ENCODE measurements at regions of chr19 and their contacts with region 1.

Region 1: DNA sequence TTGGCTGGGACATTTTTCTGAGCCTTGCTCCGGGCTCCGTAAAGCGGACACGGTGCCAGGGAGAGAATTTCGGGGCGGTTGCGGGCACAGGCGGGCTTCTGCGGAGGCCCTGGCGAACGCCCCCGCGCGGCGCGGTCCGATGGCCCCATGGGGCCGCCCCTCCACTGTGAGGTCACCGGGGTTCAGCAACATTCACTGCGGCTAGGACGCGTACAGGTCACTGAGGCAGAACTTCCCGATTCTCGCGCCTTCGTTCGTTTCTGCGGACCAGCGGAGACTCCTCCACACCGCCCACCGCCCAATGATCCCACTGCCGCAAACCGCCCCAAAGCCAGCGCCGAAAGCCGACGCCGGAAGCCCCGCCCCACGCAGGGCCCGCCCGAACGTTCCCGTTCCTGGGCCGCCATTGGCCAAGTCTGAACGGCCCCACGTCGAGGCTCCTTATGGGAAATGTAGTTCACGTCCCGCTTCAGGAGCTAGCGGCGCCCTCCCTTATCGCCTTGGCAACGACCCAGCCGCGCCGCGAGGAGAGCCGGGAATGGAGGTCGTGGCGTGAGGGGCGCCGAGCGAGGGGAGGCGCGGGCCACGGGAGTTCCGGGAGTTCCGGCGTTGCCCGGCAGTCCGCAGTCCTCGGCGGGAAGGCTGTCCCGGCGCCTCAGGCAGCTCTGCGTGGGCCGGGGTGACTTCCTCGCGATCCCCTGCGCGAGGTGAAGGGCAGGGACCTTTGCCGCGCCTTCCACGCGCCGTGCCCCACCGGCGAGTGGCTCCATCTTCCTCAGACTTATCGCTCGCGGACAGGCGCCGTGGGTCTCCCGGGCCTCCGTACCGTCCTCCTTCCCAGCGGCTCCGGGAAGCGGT is at the start of gene ZNF584:
- DNase-seq: peak; percentile 92 to 98 (median 95)
- ATAC-seq: peak; percentile 94
- H3K4me3 ChIP-seq: peak within 1 kb of the TSS; percentile 87
- H3K27ac ChIP-seq: peak within 1 kb of the TSS; percentile 97
- H3K4me1 ChIP-seq: peaks cover 18 to 39% of the 10 kb centered on the region in 2 experiments
- H3K27me3 ChIP-seq: no peaks in the 10 kb centered on the region
- CTCF ChIP-seq: peak in 1 of 3 experiments; percentile 32; a peak in 3 of 6 replicates
- EP300 ChIP-seq: peak; percentile 26; the same call in 1 of the 2 replicates
- POLR2A ChIP-seq: peak; percentile 96
- RAD21 ChIP-seq: peak in 1 of 2 experiments; percentile 21; a peak in 2 of 4 replicates
- polyA plus RNA-seq, gene ZNF584: 5.8 to 7.1 TPM

Region 2: DNA sequence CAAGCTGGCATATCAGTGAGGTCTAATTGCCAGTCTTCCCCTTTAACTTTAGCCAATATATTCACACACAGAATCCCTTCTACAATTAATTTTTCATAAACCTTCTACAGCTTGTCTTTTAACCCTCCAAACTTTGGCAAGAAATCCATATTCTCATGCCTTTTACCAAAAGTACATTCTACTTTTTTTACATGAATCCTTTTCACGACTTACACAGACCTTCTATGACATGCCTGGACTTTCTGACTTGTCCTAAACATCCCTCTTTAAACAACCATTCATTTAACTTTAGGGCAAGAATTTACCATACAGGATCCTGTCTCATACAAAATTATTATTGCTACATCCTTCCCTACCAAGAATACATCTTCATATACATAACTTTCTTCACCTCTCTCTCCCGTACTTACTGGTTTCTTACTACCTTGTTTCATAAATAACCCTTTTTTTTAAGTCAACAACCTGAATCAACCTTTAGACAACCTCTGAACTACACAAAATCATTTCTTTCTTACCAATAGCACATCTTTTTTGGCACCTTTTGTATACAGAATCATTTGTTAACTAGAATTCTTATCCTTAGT is 156.2 kb before region 1 on chr19:
- CTCF ChIA-PET with region 1: no interaction called
- POLR2A ChIA-PET with region 1: no interaction called
- in situ Hi-C with region 1: no loop called
- intact Hi-C with region 1: no loop called
- DNase-seq: no peak
- ATAC-seq: no peak
- H3K4me3 ChIP-seq: no peak overlapping the region
- H3K27ac ChIP-seq: no peak overlapping the region
- H3K4me1 ChIP-seq: no peaks in the 10 kb centered on the region
- H3K27me3 ChIP-seq: no peaks in the 10 kb centered on the region
- CTCF ChIP-seq: no peak
- EP300 ChIP-seq: no peak
- POLR2A ChIP-seq: no peak
- RAD21 ChIP-seq: no peak

Region 3: DNA sequence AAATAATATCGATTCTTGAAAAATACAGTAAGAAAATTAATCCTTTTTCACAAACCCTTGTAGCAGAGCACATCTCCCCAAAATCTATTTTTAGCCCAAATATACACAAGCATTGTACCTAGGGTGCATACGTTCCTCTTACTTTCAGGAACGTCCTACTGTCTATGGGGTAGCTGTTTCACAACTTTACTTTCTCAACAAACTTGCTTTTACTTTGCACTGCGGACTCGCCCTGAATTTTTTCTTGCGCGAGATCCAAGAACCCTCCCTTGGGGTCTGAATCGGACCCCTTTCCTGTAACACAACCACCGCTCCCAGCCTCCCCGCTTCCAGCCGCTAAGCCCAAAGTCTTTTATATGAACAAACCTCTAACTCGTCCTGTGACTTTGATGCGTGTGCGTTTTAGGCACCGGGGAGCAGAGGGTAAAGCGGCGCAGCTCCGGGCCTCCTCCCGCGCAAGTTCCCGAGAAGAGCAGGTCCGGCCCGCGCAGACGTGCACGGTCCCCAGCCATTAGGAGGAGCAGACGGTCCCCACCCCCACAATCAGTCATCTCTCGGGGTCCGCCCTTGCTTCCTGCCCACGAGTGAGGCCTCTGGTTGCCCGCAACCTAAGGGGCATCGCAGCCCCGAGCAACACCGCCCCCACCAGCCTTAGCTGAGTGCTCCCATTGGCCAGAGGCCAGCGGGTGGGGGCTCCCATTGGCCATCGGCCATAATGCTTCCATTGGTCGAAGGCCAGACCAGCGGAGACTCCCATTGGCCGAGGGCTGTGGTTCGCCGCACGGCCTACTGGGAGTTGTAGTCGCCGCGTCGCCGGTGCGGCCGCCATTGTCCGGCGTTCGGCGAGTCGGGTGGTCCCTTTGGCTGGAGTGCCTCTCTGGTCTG is 130.0 kb before region 1 on chr19 and contains the start of gene ZNF8:
- CTCF ChIA-PET with region 1: no interaction called
- POLR2A ChIA-PET with region 1: no interaction called
- in situ Hi-C with region 1: no loop called
- intact Hi-C with region 1: loop called (anchors 5 kb)
- DNase-seq: peak; percentile 99 to 100 (median 99)
- ATAC-seq: peak; percentile 98
- H3K4me3 ChIP-seq: peak within 1 kb of the TSS; percentile 64
- H3K27ac ChIP-seq: peak within 1 kb of the TSS; percentile 84
- H3K4me1 ChIP-seq: peaks cover 10 to 19% of the 10 kb centered on the region in 2 experiments; a peak in 4 of 5 replicates
- H3K27me3 ChIP-seq: no peaks in the 10 kb centered on the region
- CTCF ChIP-seq: 0 out of 6 replicates have a peak, but pooled peaks of 1 of the 3 experiments have one; percentile 13
- EP300 ChIP-seq: no peak
- POLR2A ChIP-seq: peak; percentile 91
- RAD21 ChIP-seq: no peak; a peak in 1 of 4 replicates
- polyA plus RNA-seq, gene ZNF8: 0.71 to 1.0 TPM

Region 4: GRCh38 chr19:58380722-58381466 is 27.5 kb before region 1 on chr19 and contains the start of gene ZNF837:
- CTCF ChIA-PET with region 1: no interaction called
- POLR2A ChIA-PET with region 1: no interaction called
- in situ Hi-C with region 1: no loop called
- intact Hi-C with region 1: no loop called
- DNase-seq: peak; percentile 89 to 100 (median 94)
- ATAC-seq: peak; percentile 93
- H3K4me3 ChIP-seq: peak within 1 kb of the TSS; percentile 61
- H3K27ac ChIP-seq: peak within 1 kb of the TSS; percentile 88
- H3K4me1 ChIP-seq: peaks cover 20 to 47% of the 10 kb centered on the region in 2 experiments
- H3K27me3 ChIP-seq: no peaks in the 10 kb centered on the region
- CTCF ChIP-seq: no peak
- EP300 ChIP-seq: no peak
- POLR2A ChIP-seq: peak; percentile 96
- RAD21 ChIP-seq: peak in 1 of 2 experiments; percentile 31; a peak in 2 of 4 replicates
- polyA plus RNA-seq, gene ZNF837: not detected

Region 5: GRCh38 chr19:58466760-58467589 is 58.6 kb after region 1 on chr19 and contains the start of gene ZNF324:
- CTCF ChIA-PET with region 1: no interaction called
- POLR2A ChIA-PET with region 1: no interaction called
- in situ Hi-C with region 1: no loop called
- intact Hi-C with region 1: loop called (anchors 5 kb)
- DNase-seq: peak; percentile 95 to 99 (median 97)
- ATAC-seq: peak; percentile 97
- H3K4me3 ChIP-seq: peak within 1 kb of the TSS; percentile 71
- H3K27ac ChIP-seq: peak within 1 kb of the TSS; percentile 58
- H3K4me1 ChIP-seq: peaks cover 10 to 24% of the 10 kb centered on the region in 2 experiments; a peak in 4 of 5 replicates
- H3K27me3 ChIP-seq: no peaks in the 10 kb centered on the region
- CTCF ChIP-seq: peak in 1 of 3 experiments; percentile 21; a peak in 2 of 6 replicates
- EP300 ChIP-seq: no peak
- POLR2A ChIP-seq: peak; percentile 79
- RAD21 ChIP-seq: peak in 1 of 2 experiments; percentile 25; a peak in 3 of 4 replicates
- polyA plus RNA-seq, gene ZNF324: 0.92 to 1.2 TPM

Region 6: GRCh38 chr19:58543826-58544590 is 135.6 kb after region 1 on chr19 and contains the start of gene TRIM28:
- CTCF ChIA-PET with region 1: no interaction called
- POLR2A ChIA-PET with region 1: no interaction called
- in situ Hi-C with region 1: no loop called
- intact Hi-C with region 1: no loop called
- DNase-seq: peak; percentile 97 to 100 (median 100)
- ATAC-seq: peak; percentile 96
- H3K4me3 ChIP-seq: peak within 1 kb of the TSS; percentile 100
- H3K27ac ChIP-seq: peak within 1 kb of the TSS; percentile 88
- H3K4me1 ChIP-seq: peaks cover 13 to 28% of the 10 kb centered on the region in 2 experiments; a peak in 4 of 5 replicates
- H3K27me3 ChIP-seq: no peaks in the 10 kb centered on the region
- CTCF ChIP-seq: no peak
- EP300 ChIP-seq: no peak
- POLR2A ChIP-seq: peak; percentile 92
- RAD21 ChIP-seq: no peak
- polyA plus RNA-seq, gene TRIM28: 12.1 to 29.3 TPM